Cardiac septum (tissue), 1 donor: ENCODE measurements at regions of chr11 and their contacts with region 1.

Region 1: DNA sequence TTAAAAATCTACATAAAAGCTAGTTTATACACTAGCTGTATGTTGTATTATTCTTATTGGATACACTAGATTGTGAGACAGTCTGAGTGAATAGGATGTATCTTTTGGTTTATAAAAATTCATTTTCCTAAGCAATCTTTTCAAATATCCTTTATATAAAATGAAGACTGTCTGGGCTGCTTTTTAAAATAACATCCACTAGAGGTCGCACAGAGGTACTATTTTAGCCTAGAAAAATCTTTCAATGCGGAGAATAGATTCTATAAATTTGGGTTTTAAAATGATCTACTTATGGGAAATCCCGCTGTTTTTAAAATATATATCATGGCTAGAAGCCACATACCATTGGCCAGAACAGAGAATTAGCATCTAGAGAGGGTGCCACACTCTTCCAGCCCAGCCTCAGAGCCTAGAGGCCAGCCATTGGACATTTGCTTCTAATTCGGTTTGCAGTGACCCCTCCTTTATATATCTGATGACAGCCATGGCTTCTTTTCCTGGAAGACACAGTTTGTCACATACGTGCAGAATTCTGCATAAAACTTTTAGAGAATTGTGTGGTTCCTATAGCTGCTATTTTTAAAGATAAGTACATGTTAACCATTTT is 7.3 kb downstream of the C11orf97 start:
- DNase-seq: no peak

Region 2: DNA sequence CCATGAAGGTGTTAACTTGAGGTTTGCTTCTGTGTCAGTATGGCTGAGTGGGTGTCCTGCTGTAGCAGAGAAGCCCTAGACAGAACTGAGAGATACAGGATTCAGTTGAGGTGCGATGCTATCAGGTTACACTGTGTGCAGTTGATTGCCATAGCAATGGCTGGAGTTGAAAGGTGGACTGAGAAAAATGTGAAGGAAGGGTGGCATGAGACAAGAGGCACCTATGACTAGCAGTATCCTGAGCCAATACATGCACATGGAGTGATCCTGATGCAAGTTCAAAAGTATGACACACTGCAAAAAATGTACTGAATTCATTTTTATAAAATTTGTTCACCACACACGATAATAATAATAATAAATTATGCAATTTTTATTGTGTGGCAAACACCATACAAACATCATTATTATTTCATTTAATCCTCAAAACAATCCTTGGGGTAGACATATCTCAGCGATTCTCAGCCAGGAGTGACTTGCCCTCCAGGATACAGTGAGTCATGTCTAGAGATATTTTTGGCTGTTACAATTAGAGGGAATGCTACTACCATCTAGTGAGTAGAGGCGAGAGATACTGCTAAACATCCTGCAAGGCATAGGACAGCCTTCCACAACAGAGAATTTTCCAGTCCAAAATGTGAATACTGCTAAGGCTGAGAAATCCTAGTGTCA is 43.7 kb after region 1 on chr11:
- intact Hi-C with region 1: loop called (anchors 2 kb)
- DNase-seq: no peak

Region 3: DNA sequence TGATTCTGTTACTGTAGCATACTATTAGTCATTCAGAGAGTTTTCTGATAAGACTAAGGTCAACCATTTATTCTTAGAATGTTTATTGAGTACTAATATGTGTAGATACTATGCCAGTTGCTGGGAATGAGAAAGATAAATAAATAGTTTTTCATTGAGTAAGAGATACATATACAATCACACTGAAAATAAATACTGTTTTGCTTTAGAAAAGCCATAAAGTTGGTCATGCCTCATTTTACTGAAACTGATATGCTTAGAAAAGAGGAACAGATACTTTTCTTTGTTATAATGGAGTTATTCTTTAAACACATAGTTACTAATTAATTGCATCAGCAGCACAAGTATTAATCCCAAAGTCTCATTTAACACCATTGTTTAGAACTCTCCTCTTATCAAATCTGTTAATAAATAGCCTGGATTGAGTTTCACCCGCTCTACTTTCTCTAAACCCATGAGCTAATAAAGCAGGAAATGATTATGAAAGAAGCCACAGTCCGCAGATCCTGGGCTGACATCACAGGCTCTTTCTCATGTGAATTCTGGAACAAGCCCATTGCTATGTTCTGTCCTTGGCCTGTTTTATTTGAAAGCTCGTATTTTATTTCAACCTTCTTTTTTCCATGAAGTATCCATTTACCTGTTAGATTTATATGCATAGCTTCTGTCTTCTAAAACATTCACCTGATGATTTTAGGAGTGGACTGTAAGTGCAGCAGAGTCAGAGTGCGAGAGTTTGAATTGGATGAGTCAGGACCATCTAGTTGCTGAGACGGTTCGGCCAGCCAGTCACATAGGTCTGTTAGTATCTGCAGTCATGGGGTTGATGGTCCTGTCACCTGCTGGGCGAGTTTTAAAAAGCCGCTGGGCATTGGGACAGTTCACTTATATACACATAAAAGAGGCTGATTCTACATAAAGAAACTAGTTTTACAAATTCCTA is 83.1 kb after region 1 on chr11:
- intact Hi-C with region 1: loop called (anchors 5 kb)
- DNase-seq: peak; percentile 82